Caco-2 (cell line): ENCODE measurements at regions of chr2 and their contacts with region 1.

Region 1: GRCh38 chr2:47767880-47768609 is 14.9 kb upstream of the MSH6 start:
- DNase-seq: peak; percentile 66 to 89
- H3K4me3 ChIP-seq: no peak overlapping the region
- H3K4me3 Mint-ChIP-seq: peak overlapping the region; percentile 36
- H3K27ac Mint-ChIP-seq: no peak overlapping the region
- H3K4me1 ChIP-seq: peaks cover 8% of the 10 kb centered on the region; the same call in 1 of the 2 replicates
- H3K4me1 Mint-ChIP-seq: peaks cover 6% of the 10 kb centered on the region
- H3K27me3 ChIP-seq: no peaks in the 10 kb centered on the region
- H3K27me3 Mint-ChIP-seq: no peaks in the 10 kb centered on the region
- CTCF ChIP-seq: peak; percentile 99

Region 2: DNA sequence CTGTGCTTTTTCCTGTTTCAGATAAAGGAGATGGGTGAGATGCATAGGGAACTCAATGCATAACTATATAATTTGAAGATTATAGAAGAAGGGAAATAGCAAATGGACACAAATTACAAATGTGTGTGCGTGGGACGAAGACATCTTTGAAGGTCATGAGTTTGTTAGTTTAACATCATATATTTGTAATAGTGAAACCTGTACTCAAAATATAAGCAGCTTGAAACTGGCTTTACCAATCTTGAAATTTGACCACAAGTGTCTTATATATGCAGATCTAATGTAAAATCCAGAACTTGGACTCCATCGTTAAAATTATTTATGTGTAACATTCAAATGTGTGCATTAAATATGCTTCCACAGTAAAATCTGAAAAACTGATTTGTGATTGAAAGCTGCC is 381.5 kb before region 1 on chr2:
- CTCF ChIA-PET with region 1: interaction called, 10 read pairs
- POLR2A ChIA-PET with region 1: no interaction called
- intact Hi-C with region 1: loop called (anchors 5 kb)
- DNase-seq: no peak
- H3K4me3 ChIP-seq: no peak overlapping the region
- H3K4me3 Mint-ChIP-seq: no peak overlapping the region
- H3K27ac Mint-ChIP-seq: no peak overlapping the region
- H3K4me1 ChIP-seq: no peaks in the 10 kb centered on the region
- H3K4me1 Mint-ChIP-seq: no peaks in the 10 kb centered on the region
- H3K27me3 ChIP-seq: no peaks in the 10 kb centered on the region
- H3K27me3 Mint-ChIP-seq: no peaks in the 10 kb centered on the region
- CTCF ChIP-seq: no peak

Region 3: GRCh38 chr2:47520825-47521665 is 247.0 kb before region 1 on chr2:
- CTCF ChIA-PET with region 1: interaction called, 11 read pairs
- POLR2A ChIA-PET with region 1: no interaction called
- intact Hi-C with region 1: loop called (anchors 1 kb)
- DNase-seq: peak; percentile 77 to 79
- H3K4me3 ChIP-seq: peak overlapping the region; percentile 45
- H3K4me3 Mint-ChIP-seq: peak overlapping the region; percentile 76
- H3K27ac Mint-ChIP-seq: no peak overlapping the region
- H3K4me1 ChIP-seq: no peaks in the 10 kb centered on the region
- H3K4me1 Mint-ChIP-seq: no peaks in the 10 kb centered on the region
- H3K27me3 ChIP-seq: no peaks in the 10 kb centered on the region
- H3K27me3 Mint-ChIP-seq: peaks cover 9% of the 10 kb centered on the region
- CTCF ChIP-seq: peak; percentile 50 to 55

Region 4: GRCh38 chr2:47653902-47654789 is 113.9 kb before region 1 on chr2:
- CTCF ChIA-PET with region 1: interaction called, 3 read pairs
- POLR2A ChIA-PET with region 1: no interaction called
- intact Hi-C with region 1: loop called (anchors 10 kb)
- DNase-seq: peak in 1 of 2 experiments; percentile 18
- H3K4me3 ChIP-seq: no peak overlapping the region
- H3K4me3 Mint-ChIP-seq: no peak overlapping the region
- H3K27ac Mint-ChIP-seq: no peak overlapping the region
- H3K4me1 ChIP-seq: peaks cover 7% of the 10 kb centered on the region; the same call in 1 of the 2 replicates
- H3K4me1 Mint-ChIP-seq: no peaks in the 10 kb centered on the region
- H3K27me3 ChIP-seq: no peaks in the 10 kb centered on the region
- H3K27me3 Mint-ChIP-seq: no peaks in the 10 kb centered on the region
- CTCF ChIP-seq: peak; percentile 19 to 28

Region 5: DNA sequence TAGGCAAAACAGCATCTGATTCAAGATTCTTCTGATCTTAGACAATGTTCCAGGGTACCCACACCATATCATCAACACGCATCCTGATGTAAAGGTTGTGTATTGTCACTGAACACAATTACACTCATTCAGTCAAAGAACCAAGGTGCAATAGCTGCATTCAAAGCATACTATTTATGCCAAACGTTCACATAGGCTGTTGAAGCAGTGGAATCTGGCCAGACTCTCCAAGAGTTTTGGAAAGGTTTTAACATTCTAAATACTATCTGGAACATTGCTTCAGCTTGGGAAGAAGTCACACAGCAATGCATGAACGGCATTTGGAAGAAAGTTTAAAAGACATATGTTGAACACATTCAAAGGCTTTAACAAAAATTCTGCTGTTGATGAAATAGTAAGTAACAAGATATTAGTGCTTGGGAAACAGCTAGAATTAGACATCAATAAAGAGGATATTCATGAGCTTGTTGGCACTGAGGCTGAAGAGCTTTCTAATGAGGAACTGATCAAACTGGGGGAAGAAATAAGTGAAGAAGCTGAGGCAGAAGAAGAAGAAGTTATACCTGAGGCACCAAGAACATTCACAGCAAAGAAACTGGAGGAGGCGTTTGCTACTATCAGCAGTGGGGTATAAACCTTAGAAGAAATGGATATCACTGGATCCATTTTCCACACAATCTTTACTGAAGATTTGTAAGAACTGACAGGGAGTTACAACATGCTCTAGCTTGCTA is 32.7 kb before region 1 on chr2:
- CTCF ChIA-PET with region 1: no interaction called
- POLR2A ChIA-PET with region 1: no interaction called
- intact Hi-C with region 1: loop called (anchors 1 kb)
- DNase-seq: no peak
- H3K4me3 ChIP-seq: no peak overlapping the region
- H3K4me3 Mint-ChIP-seq: no peak overlapping the region
- H3K27ac Mint-ChIP-seq: no peak overlapping the region
- H3K4me1 ChIP-seq: peaks cover 34% of the 10 kb centered on the region
- H3K4me1 Mint-ChIP-seq: peaks cover 5% of the 10 kb centered on the region
- H3K27me3 ChIP-seq: no peaks in the 10 kb centered on the region
- H3K27me3 Mint-ChIP-seq: no peaks in the 10 kb centered on the region
- CTCF ChIP-seq: no peak

Region 6: GRCh38 chr2:47992671-47993070 is 224.6 kb after region 1 on chr2:
- CTCF ChIA-PET with region 1: no interaction called
- POLR2A ChIA-PET with region 1: no interaction called
- intact Hi-C with region 1: no loop called
- DNase-seq: no peak
- H3K4me3 ChIP-seq: no peak overlapping the region
- H3K4me3 Mint-ChIP-seq: no peak overlapping the region
- H3K27ac Mint-ChIP-seq: no peak overlapping the region
- H3K4me1 ChIP-seq: no peaks in the 10 kb centered on the region
- H3K4me1 Mint-ChIP-seq: no peaks in the 10 kb centered on the region
- H3K27me3 ChIP-seq: no peaks in the 10 kb centered on the region
- H3K27me3 Mint-ChIP-seq: peaks cover 11% of the 10 kb centered on the region
- CTCF ChIP-seq: no peak

Region 7: DNA sequence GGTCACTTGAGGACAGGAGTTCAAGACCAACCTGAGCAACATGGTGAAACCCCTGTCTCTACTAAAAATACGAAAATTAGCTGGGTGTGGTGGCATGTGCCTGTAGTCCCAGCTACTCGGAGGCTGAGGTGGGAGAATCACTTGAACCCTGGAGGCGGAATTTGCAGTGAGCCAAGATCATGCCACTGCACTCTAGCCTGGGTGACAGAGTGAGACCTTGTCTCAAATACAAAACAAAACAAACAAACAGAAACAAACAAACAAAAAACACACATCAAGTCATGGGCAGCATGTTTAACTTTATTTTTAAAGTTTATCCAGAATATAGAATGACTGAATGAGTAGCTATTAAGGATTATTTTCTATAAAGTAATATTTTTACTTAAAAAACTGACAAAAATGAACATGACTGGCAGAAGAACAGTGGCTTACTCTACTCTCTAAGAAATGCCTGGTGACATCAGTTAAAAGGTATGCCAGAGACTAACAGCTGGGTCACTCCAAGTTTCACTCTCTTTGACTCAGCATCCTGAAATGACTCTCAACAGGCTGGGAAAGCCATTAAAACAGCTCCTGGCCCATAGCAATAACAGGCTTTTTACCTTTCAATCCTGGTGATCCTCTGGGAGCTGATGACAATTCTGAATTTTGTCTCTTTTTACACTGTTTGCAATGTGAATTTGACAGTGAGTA is 480.3 kb after region 1 on chr2:
- CTCF ChIA-PET with region 1: no interaction called
- POLR2A ChIA-PET with region 1: no interaction called
- intact Hi-C with region 1: no loop called
- DNase-seq: peak in 1 of 2 experiments; percentile 37
- H3K4me3 ChIP-seq: no peak overlapping the region
- H3K4me3 Mint-ChIP-seq: no peak overlapping the region
- H3K27ac Mint-ChIP-seq: no peak overlapping the region
- H3K4me1 ChIP-seq: peaks cover 22% of the 10 kb centered on the region
- H3K4me1 Mint-ChIP-seq: peaks cover 13% of the 10 kb centered on the region
- H3K27me3 ChIP-seq: no peaks in the 10 kb centered on the region
- H3K27me3 Mint-ChIP-seq: no peaks in the 10 kb centered on the region
- CTCF ChIP-seq: no peak